Activated CD4-positive, alpha-beta T cell treated with anti-CD3 and anti-CD28 coated beads, Interleukin-2, amount 10 ng/mL, durations not matched to agents 24 days and 14 days (primary cell): ENCODE measurements at regions of chr10 and their contacts with region 1.

Region 1: GRCh38 chr10:102394079-102394800 is 1.3 kb upstream of the NFKB2 start:
- DNase-seq: peak; percentile 100
- H3K4me3 Mint-ChIP-seq: peak overlapping the region; percentile 90
- H3K27ac Mint-ChIP-seq: peak overlapping the region; percentile 100
- H3K4me1 Mint-ChIP-seq: peaks cover 41% of the 10 kb centered on the region
- H3K27me3 Mint-ChIP-seq: peaks cover 3% of the 10 kb centered on the region

Region 2: DNA sequence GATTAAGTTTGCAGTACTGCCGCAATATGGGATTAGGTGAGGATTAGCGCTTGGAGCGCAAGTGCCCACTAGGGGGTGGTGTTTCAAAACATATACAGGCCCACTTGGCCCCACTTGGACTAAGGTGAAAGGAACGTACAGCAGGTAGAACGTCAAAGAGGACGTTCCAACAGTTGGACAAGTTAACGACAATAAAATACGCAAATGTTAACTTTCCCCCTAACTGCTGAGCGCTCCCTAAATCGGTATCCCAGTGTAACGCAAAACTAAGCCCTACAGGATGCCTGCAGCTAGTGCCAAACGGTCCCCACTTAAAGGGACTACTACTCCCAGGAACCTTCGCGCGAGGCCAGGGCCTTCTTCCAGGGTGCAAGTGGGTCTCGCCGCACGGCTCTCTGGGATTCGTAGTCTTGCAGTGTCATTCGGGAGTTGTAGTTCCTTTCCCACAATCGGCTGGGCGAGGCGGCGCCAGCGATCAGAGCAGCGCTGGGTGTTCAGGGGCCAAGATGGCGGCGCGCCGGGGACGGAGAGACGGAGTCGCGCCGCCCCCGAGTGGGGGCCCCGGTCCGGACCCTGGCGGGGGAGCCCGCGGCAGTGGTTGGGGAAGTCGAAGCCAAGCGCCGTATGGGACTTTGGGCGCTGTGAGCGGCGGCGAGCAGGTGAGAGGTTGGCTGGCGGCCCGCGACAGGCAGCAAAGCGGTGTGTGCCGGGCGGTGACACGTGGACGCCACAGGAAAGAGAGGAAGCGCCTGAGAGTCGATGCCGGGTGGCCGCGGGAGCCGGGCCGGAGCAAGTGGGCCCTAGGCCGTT is 261.5 kb before region 1 on chr10 and contains the start of gene PPRC1:
- intact Hi-C with region 1: loop called (anchors 1 kb)
- DNase-seq: peak; percentile 99
- H3K4me3 Mint-ChIP-seq: peak within 1 kb of the TSS; percentile 97
- H3K27ac Mint-ChIP-seq: peak within 1 kb of the TSS; percentile 100
- H3K4me1 Mint-ChIP-seq: peaks cover 33% of the 10 kb centered on the region
- H3K27me3 Mint-ChIP-seq: no peaks in the 10 kb centered on the region
- total RNA-seq, gene PPRC1: 111 and 113 TPM in 2 replicates

Region 3: GRCh38 chr10:102167861-102168260 is 226.4 kb before region 1 on chr10:
- intact Hi-C with region 1: loop called (anchors 2 kb)
- DNase-seq: no peak
- H3K4me3 Mint-ChIP-seq: no peak overlapping the region
- H3K27ac Mint-ChIP-seq: no peak overlapping the region
- H3K4me1 Mint-ChIP-seq: peaks cover 8% of the 10 kb centered on the region
- H3K27me3 Mint-ChIP-seq: peaks cover 2% of the 10 kb centered on the region

Region 4: DNA sequence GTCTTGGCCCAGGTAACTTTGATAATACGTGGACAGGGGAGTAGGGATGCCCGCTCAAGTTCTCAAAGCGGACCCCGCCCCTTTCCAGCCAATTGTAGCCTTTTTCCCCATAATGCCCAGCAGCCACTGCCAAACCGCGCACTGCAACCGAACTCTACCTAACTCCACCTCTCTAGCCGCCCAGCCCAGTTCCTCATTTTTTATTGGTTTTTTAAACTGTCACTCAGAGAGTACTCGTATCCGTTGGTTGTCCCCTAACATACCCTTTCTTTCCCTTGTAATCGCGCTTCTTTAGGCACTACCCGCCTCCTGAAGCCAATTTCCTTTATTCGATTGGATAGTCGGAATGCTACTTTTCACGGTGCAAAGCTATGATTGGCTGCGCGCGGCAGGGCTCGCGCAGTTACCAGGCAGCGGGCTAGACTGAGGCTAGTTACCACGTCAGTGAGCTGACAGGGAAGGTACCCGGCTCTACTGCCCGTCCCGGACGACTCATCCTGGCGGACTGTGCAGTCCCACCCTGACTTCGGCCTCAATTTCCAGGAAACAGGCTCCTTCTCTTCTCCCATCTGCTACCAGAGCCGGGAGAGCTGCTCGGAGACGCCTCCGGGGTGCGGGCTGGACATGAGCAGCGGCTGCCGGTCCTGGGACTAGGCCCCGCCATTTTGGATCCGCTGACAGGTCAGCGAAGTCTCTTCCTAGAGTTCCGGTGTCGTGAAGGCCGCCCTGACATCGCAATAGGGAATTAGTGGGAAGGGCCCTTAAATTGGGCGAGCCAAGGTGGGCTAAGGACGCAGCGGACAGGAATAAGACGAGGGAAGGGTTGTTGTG is 148.9 kb before region 1 on chr10 and contains the start of gene GBF1:
- intact Hi-C with region 1: loop called (anchors 1 kb)
- DNase-seq: peak; percentile 97
- H3K4me3 Mint-ChIP-seq: peak within 1 kb of the TSS; percentile 100
- H3K27ac Mint-ChIP-seq: peak within 1 kb of the TSS; percentile 94
- H3K4me1 Mint-ChIP-seq: peaks cover 40% of the 10 kb centered on the region
- H3K27me3 Mint-ChIP-seq: peaks cover 14% of the 10 kb centered on the region
- total RNA-seq, gene GBF1: 45.2 and 47.7 TPM in 2 replicates

Region 5: GRCh38 chr10:102420810-102421644 is 26.8 kb after region 1 on chr10 and contains the start of gene FBXL15:
- intact Hi-C with region 1: loop called (anchors 1 kb)
- DNase-seq: peak; percentile 99
- H3K4me3 Mint-ChIP-seq: peak within 1 kb of the TSS; percentile 96
- H3K27ac Mint-ChIP-seq: peak within 1 kb of the TSS; percentile 95
- H3K4me1 Mint-ChIP-seq: peaks cover 26% of the 10 kb centered on the region
- H3K27me3 Mint-ChIP-seq: peaks cover 20% of the 10 kb centered on the region
- total RNA-seq, gene FBXL15: 14.0 and 16.4 TPM in 2 replicates

Region 6: DNA sequence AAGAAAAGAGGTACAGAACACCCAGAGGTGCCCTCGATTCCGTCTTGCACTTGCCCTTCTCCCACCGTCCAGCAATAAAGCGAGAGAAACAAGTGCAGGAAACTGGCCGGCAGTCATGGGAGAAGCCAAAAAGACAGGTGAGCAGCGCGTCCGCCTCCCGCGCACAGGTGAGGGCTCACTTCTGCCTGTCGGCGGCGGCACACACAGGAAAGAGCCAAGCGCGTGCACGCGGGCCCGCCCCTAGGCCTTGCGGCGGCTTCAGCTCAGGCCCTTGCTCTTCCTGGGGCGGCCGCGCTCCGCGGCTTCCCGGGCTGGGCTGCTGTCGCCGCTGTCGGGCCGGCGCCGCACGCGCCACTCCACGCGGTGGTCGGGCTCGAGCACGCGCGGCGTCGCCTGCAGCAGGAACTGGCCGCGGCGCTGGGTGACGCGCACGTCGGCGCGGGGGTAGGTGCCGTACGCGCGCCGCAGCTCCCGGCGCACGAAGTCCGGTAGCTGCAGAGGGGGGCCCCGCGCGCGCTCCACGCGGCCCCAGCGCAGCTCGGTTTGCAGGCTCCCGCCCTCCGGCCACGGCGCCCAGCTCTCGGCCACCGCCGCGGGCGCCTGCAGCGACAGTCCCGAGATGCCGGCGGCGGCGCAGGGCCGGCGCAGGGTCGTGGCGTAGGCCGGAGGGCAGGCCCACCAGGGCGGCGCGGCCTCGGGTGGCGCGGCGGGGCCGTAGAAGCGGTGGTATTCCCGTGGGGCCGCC is 56.1 kb after region 1 on chr10:
- intact Hi-C with region 1: loop called (anchors 1 kb)
- DNase-seq: peak; percentile 97
- H3K4me3 Mint-ChIP-seq: peak overlapping the region; percentile 98
- H3K27ac Mint-ChIP-seq: peak overlapping the region; percentile 97
- H3K4me1 Mint-ChIP-seq: peaks cover 29% of the 10 kb centered on the region
- H3K27me3 Mint-ChIP-seq: no peaks in the 10 kb centered on the region

Region 7: GRCh38 chr10:102583435-102584417 is 189.5 kb after region 1 on chr10:
- intact Hi-C with region 1: loop called (anchors 5 kb)
- DNase-seq: peak; percentile 95
- H3K4me3 Mint-ChIP-seq: no peak overlapping the region
- H3K27ac Mint-ChIP-seq: no peak overlapping the region
- H3K4me1 Mint-ChIP-seq: peaks cover 7% of the 10 kb centered on the region
- H3K27me3 Mint-ChIP-seq: no peaks in the 10 kb centered on the region

Region 8: GRCh38 chr10:103069453-103070331 is 675.5 kb after region 1 on chr10:
- intact Hi-C with region 1: no loop called
- DNase-seq: peak; percentile 91
- H3K4me3 Mint-ChIP-seq: peak overlapping the region; percentile 35
- H3K27ac Mint-ChIP-seq: peak overlapping the region; percentile 75
- H3K4me1 Mint-ChIP-seq: peaks cover 28% of the 10 kb centered on the region
- H3K27me3 Mint-ChIP-seq: no peaks in the 10 kb centered on the region